ENCODE measurements at regions of chr20 and their contacts with region 1.

Region 1: DNA sequence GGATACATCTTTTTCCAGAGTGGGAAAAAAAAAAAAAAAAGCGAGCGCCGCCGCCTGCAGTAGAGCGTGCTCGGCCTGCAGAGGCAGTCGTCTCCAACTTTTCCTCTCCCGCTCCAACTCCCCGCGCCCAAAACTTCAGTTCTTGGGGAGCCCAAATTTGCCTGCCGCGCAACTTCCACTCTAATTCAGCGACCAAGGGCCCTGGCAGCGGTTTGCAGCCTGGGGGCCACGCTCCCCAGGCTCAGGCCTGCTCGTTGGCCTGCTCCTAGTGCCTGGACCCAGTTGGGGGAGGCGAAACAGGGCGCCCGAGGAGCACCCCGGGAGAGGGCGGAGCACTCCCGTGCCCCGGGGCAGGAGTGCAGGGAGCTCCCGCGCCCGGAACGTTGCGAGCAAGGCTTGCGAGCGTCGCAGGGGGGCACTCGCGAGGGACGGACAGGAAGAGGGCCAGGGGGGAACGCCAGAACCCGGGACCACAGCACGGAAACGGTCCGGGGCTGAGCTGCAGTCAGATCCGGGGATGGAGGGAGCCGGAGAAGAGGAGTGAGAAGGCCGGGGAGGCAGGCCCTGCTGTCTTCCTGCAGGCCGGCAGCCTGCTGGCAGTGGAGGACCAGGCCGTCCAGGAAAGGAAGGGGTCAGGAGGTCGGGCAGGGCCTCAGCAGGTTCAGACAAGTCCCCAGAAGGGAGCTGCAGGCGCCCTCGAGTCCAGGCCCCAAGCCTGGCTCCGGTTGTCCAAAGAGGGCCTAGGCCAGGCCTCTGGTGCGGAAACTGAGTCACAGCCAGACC is at the start of gene STX16:
- DNase-seq: peak; percentile 90 to 95
- ATAC-seq: peak; percentile 96 to 98 (median 97)
- H3K4me3 ChIP-seq: peak within 1 kb of the TSS; percentile 73
- H3K27ac ChIP-seq: peak within 1 kb of the TSS; percentile 93
- H3K4me1 ChIP-seq: peaks cover 49% of the 10 kb centered on the region
- H3K27me3 ChIP-seq: no peaks in the 10 kb centered on the region
- CTCF ChIP-seq: peak; percentile 49
- total RNA-seq, gene STX16: 17.9 to 26.3 (median 21.1) TPM

Region 2: GRCh38 chr20:58309575-58310290 is 341.2 kb before region 1 on chr20 and contains the start of gene RAB22A:
- intact Hi-C with region 1: loop called in 1 of 2 experiments (anchors 5 kb)
- DNase-seq: peak; percentile 84 to 92
- ATAC-seq: peak; percentile 93 to 99 (median 96)
- H3K4me3 ChIP-seq: peak within 1 kb of the TSS; percentile 100
- H3K27ac ChIP-seq: peak within 1 kb of the TSS; percentile 93
- H3K4me1 ChIP-seq: peaks cover 16% of the 10 kb centered on the region
- H3K27me3 ChIP-seq: no peaks in the 10 kb centered on the region
- CTCF ChIP-seq: no peak
- total RNA-seq, gene RAB22A: 7.1 to 8.5 (median 8.1) TPM

Region 3: DNA sequence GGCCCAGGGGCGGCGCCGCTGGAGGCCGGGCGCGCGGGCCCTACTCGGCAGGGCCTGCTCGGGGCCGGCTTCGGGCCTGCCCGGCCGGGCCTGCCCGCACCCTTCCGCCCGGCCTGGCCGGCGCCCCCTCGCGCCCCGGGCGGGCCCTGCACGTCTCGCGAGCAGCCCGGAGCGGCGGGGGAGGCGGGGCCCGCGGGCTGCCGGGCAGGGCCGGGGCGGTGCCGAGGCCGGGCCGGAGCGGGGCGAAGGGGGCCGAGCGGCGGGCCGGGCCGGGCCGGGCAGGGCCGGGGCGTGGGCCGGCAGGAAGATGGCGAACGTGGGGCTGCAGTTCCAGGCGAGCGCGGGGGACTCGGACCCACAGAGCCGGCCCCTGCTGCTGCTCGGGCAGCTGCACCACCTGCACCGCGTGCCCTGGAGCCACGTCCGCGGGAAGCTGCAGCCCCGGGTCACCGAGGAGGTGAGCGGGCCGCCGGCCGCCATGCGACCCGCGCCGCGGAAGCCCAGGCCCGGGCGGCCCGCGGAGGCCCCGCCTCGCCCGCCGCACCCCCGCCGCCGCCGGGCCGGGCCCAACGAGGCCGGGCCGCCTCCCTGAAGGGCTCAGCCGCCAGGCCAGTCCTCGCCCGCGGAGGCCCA is 41.7 kb after region 1 on chr20 and contains the start of gene NPEPL1:
- intact Hi-C with region 1: loop called (anchors 2 to 5 kb)
- DNase-seq: peak; percentile 83 to 84
- ATAC-seq: peak; percentile 85 to 91 (median 86)
- H3K4me3 ChIP-seq: peak within 1 kb of the TSS; percentile 72
- H3K27ac ChIP-seq: peak within 1 kb of the TSS; percentile 91
- H3K4me1 ChIP-seq: peaks cover 32% of the 10 kb centered on the region
- H3K27me3 ChIP-seq: no peaks in the 10 kb centered on the region
- CTCF ChIP-seq: peak; percentile 31
- total RNA-seq, gene NPEPL1: 29.1 to 52.3 (median 36.4) TPM

Region 4: DNA sequence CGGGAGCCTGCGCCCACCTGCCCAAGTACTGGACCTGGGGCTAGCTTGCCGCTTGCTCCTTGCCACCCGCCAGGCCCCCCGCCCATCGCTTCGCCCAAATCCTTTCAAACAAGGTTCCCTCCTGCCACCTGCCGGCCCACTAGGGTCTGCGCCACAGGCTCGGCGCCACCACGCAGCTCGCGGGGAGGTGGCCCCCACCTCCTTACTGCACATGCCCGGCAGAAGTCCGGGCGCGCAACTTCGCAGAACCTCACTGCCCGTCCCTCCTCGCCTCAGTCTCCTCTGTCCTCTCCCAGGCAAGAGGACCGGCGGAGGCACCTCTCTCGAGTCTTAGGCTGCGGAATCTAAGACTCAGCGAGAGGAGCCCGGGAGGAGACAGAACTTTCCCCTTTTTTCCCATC is 188.5 kb after region 1 on chr20:
- intact Hi-C with region 1: loop called (anchors 5 to 10 kb)
- DNase-seq: peak in 1 of 2 donors; percentile 68
- ATAC-seq: peak; percentile 64 to 92 (median 76)
- H3K4me3 ChIP-seq: peak overlapping the region; percentile 52
- H3K27ac ChIP-seq: no peak overlapping the region
- H3K4me1 ChIP-seq: no peaks in the 10 kb centered on the region
- H3K27me3 ChIP-seq: peaks cover 0 to 34% (median 5%) of the 10 kb centered on the region in 3 donors
- CTCF ChIP-seq: peak; percentile 42

Region 5: DNA sequence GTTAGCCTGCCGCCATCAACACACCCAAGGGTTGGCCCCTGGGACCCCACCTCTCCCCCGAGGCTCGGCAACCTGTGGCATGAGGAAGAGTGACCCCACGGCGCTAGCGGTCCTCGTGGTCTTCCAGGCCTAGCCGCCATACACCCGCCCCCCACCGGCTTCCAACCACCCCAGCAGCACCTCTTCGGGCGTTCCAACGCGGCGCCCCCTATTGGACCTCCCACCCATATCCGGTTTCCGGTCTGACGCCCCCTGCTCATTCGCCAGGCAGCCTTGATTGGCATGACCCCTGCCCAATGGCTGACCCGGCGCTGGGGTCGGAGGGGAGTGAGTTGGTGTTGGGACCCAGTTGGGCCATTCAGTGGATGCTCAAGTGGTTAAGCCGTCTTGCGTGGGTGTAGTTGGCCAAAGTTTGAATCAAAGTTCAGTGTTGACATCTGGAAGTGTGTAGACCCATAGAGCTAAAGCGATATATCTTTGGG is 199.8 kb after region 1 on chr20 and contains the start of gene GNAS-AS1:
- intact Hi-C with region 1: loop called in 1 of 2 experiments (anchors 5 kb)
- DNase-seq: peak; percentile 75 to 90
- ATAC-seq: peak; percentile 73 to 88 (median 81)
- H3K4me3 ChIP-seq: peak within 1 kb of the TSS; percentile 59
- H3K27ac ChIP-seq: no peak within 1 kb of the TSS
- H3K4me1 ChIP-seq: no peaks in the 10 kb centered on the region
- H3K27me3 ChIP-seq: peaks cover 0 to 51% (median 9%) of the 10 kb centered on the region in 3 donors
- CTCF ChIP-seq: no peak
- total RNA-seq, gene GNAS-AS1: 0.26 to 1.0 (median 0.65) TPM in 3 of 4 donors, not detected in the other

Region 6: GRCh38 chr20:58880994-58881752 is 230.2 kb after region 1 on chr20:
- intact Hi-C with region 1: no loop called
- DNase-seq: no peak
- ATAC-seq: peak in 2 of 4 donors; percentile 34 to 46
- H3K4me3 ChIP-seq: no peak overlapping the region
- H3K27ac ChIP-seq: no peak overlapping the region
- H3K4me1 ChIP-seq: peaks cover 5% of the 10 kb centered on the region
- H3K27me3 ChIP-seq: no peaks in the 10 kb centered on the region
- CTCF ChIP-seq: no peak

Region 7: DNA sequence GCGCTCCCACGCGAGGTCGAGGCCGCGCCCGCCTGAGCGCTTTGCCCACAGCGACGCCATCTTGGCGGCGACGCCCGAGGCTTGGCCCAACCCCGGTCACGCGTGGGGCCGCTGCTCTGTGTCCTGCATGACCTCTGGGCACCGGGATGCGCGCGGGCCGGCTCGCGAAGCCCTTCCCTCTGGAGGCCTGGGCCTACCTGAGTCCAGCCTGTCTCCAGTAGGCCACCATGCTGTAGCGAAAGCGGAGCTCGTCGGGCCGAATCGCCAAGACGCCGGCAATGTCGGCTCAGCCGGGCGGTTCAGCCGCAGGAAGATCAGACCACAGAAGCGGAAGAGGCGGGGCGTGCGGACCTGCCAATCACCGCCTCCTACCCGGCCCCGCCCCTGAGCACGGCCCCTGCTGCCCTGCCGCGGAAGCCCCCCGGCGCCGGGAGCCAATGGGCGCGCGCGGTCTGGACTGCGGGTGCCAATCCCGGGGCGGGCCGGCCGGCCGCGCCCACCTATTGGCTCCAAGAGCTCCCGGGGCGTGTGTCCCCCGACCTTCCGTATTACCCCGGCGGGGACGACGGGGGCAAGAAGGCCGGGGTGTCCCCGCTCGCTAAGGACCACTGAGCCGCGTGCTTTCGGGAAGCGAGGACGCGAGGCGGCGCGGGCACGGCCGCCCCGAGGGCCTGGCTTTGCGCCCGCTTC is 381.2 kb after region 1 on chr20 and contains the start of gene ATP5F1E:
- intact Hi-C with region 1: loop called in 1 of 2 experiments (anchors 5 kb)
- DNase-seq: peak; percentile 98
- ATAC-seq: peak; percentile 99 to 100 (median 100)
- H3K4me3 ChIP-seq: peak within 1 kb of the TSS; percentile 89
- H3K27ac ChIP-seq: peak within 1 kb of the TSS; percentile 92
- H3K4me1 ChIP-seq: peaks cover 37% of the 10 kb centered on the region
- H3K27me3 ChIP-seq: no peaks in the 10 kb centered on the region
- CTCF ChIP-seq: no peak
- total RNA-seq, gene ATP5F1E: 72.1 to 88.5 (median 87.1) TPM